ENCODE measurements at regions of chr10 and their contacts with region 1.

Region 1: GRCh38 chr10:16817125-16818019 is at the start of gene RSU1:
- DNase-seq: peak; percentile 100
- ATAC-seq: peak; percentile 96
- H3K4me3 ChIP-seq: peak within 1 kb of the TSS; percentile 71 to 75
- H3K4me3 Mint-ChIP-seq: peak within 1 kb of the TSS; percentile 95
- H3K27ac ChIP-seq: peak within 1 kb of the TSS; percentile 75 to 92
- H3K27ac Mint-ChIP-seq: peak within 1 kb of the TSS; percentile 95
- H3K4me1 ChIP-seq: peaks cover 22% of the 10 kb centered on the region
- H3K4me1 Mint-ChIP-seq: peaks cover 38% of the 10 kb centered on the region
- H3K27me3 ChIP-seq: no peaks in the 10 kb centered on the region
- H3K27me3 Mint-ChIP-seq: no peaks in the 10 kb centered on the region
- CTCF ChIP-seq: no peak
- total RNA-seq, gene RSU1: 23.8 to 26.1 TPM

Region 2: GRCh38 chr10:14959276-14960057 is 1857.9 kb before region 1 on chr10 and contains the start of gene MEIG1:
- CTCF ChIA-PET with region 1: no interaction called
- POLR2A ChIA-PET with region 1: no interaction called
- intact Hi-C with region 1: loop called in 1 of 2 experiments (anchors 10 kb)
- DNase-seq: peak; percentile 79 to 98 (median 92)
- ATAC-seq: peak; percentile 83
- H3K4me3 ChIP-seq: peak within 1 kb of the TSS; percentile 77 to 95
- H3K4me3 Mint-ChIP-seq: peak within 1 kb of the TSS; percentile 97
- H3K27ac ChIP-seq: peak within 1 kb of the TSS; percentile 86 to 88
- H3K27ac Mint-ChIP-seq: peak within 1 kb of the TSS; percentile 95
- H3K4me1 ChIP-seq: peaks cover 11% of the 10 kb centered on the region
- H3K4me1 Mint-ChIP-seq: peaks cover 24% of the 10 kb centered on the region
- H3K27me3 ChIP-seq: no peaks in the 10 kb centered on the region
- H3K27me3 Mint-ChIP-seq: no peaks in the 10 kb centered on the region
- CTCF ChIP-seq: no peak
- total RNA-seq, gene MEIG1: not detected

Region 3: GRCh38 chr10:16436758-16437539 is 380.4 kb before region 1 on chr10 and contains the start of gene PTER:
- CTCF ChIA-PET with region 1: no interaction called
- POLR2A ChIA-PET with region 1: interaction called, 3 read pairs
- intact Hi-C with region 1: loop called (anchors 1 to 2 kb)
- DNase-seq: peak; percentile 93 to 99 (median 96)
- ATAC-seq: peak; percentile 99
- H3K4me3 ChIP-seq: peak within 1 kb of the TSS; percentile 77 to 79
- H3K4me3 Mint-ChIP-seq: peak within 1 kb of the TSS; percentile 88
- H3K27ac ChIP-seq: peak within 1 kb of the TSS; percentile 61 to 77
- H3K27ac Mint-ChIP-seq: peak within 1 kb of the TSS; percentile 84
- H3K4me1 ChIP-seq: peaks cover 31% of the 10 kb centered on the region
- H3K4me1 Mint-ChIP-seq: peaks cover 51% of the 10 kb centered on the region
- H3K27me3 ChIP-seq: no peaks in the 10 kb centered on the region
- H3K27me3 Mint-ChIP-seq: no peaks in the 10 kb centered on the region
- CTCF ChIP-seq: no peak
- total RNA-seq, gene PTER: 6.4 TPM

Region 4: DNA sequence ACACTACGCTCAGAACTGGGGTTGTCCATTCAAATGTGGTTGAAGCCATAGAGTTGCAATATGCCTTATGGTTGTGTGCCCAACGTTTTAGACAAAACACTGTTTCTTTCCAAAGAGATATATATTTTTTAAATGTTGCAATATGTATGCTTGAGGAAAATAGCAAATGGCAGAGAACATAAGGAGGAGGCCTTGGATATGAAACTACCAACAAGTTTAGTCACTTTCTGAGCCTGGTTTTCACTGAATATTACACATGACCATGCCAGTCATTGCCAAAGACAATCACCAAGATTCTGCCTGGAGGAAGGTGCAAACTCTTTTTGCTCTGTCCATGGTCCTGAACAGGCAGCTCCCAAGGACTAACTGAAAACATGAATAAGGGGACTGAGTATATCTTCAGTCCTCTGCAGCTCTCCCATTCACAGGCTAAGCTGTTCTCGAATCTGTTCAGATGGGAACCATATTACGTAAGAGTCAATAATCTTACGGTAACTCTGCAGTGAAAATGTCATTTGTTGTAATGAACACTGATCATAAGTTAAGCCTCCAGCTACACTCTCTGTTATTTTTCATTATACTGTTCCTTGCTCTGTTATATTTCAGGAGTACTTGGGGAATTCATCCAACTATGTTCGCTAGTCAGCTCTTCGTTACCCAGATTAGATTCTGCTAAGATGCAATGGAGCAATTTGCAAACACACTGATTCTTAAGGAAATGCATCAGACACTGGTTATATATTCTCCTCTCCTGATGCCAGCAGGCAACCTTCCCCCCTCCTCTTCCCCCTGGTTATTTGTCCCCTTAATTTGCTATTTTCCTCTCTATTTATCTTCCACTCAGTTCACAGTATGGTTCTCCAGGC is 205.0 kb before region 1 on chr10:
- CTCF ChIA-PET with region 1: no interaction called
- POLR2A ChIA-PET with region 1: no interaction called
- intact Hi-C with region 1: no loop called
- DNase-seq: peak in 3 of 9 experiments; percentile 7 to 17 (median 12)
- ATAC-seq: no peak
- H3K4me3 ChIP-seq: no peak overlapping the region
- H3K4me3 Mint-ChIP-seq: no peak overlapping the region
- H3K27ac ChIP-seq: no peak overlapping the region
- H3K27ac Mint-ChIP-seq: no peak overlapping the region
- H3K4me1 ChIP-seq: no peaks in the 10 kb centered on the region
- H3K4me1 Mint-ChIP-seq: no peaks in the 10 kb centered on the region
- H3K27me3 ChIP-seq: no peaks in the 10 kb centered on the region
- H3K27me3 Mint-ChIP-seq: no peaks in the 10 kb centered on the region
- CTCF ChIP-seq: no peak

Region 5: DNA sequence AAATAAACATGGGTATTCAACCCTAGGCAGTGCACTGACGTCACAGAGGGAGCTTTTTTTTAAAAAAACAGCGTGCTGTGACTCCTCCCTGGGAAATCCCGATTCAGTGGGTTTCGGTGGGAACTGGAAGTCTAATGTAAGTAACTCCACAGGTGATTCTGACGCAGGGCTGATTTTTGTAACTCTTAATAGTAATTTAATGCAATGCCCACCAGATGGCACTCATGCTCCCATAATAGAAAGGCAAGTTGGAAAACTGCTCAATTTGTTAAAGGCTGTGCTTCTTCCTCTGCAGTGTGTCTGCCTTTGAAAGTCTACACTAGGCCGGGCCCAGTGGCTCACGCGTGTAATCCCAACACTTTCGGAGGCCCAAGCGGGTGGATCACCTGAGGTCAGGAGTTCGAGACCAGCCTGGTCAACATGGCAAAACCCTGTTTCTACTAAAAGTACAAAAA is 10.8 kb after region 1 on chr10:
- CTCF ChIA-PET with region 1: interaction called, 13 read pairs
- POLR2A ChIA-PET with region 1: interaction called, 3 read pairs
- intact Hi-C with region 1: loop called in 1 of 2 experiments (anchors 1 kb)
- DNase-seq: peak in 8 of 9 experiments; percentile 47 to 87 (median 63)
- ATAC-seq: peak; percentile 96
- H3K4me3 ChIP-seq: no peak overlapping the region
- H3K4me3 Mint-ChIP-seq: no peak overlapping the region
- H3K27ac ChIP-seq: no peak overlapping the region
- H3K27ac Mint-ChIP-seq: peak overlapping the region; percentile 45
- H3K4me1 ChIP-seq: no peaks in the 10 kb centered on the region
- H3K4me1 Mint-ChIP-seq: peaks cover 4% of the 10 kb centered on the region
- H3K27me3 ChIP-seq: no peaks in the 10 kb centered on the region
- H3K27me3 Mint-ChIP-seq: no peaks in the 10 kb centered on the region
- CTCF ChIP-seq: peak; percentile 69

Region 6: GRCh38 chr10:17200912-17201793 is 383.8 kb after region 1 on chr10 and contains the start of gene TRDMT1:
- CTCF ChIA-PET with region 1: no interaction called
- POLR2A ChIA-PET with region 1: interaction called, 3 read pairs
- intact Hi-C with region 1: loop called in 1 of 2 experiments (anchors 1 kb)
- DNase-seq: peak; percentile 66 to 87 (median 76)
- ATAC-seq: peak; percentile 77
- H3K4me3 ChIP-seq: peak within 1 kb of the TSS; percentile 69 to 83
- H3K4me3 Mint-ChIP-seq: peak within 1 kb of the TSS; percentile 98
- H3K27ac ChIP-seq: peak within 1 kb of the TSS; percentile 80 to 92
- H3K27ac Mint-ChIP-seq: peak within 1 kb of the TSS; percentile 97
- H3K4me1 ChIP-seq: peaks cover 21% of the 10 kb centered on the region
- H3K4me1 Mint-ChIP-seq: peaks cover 35% of the 10 kb centered on the region
- H3K27me3 ChIP-seq: no peaks in the 10 kb centered on the region
- H3K27me3 Mint-ChIP-seq: no peaks in the 10 kb centered on the region
- CTCF ChIP-seq: no peak
- total RNA-seq, gene TRDMT1: 10.4 to 11.7 TPM

Region 7: GRCh38 chr10:17643755-17644484 is 826.5 kb after region 1 on chr10 and contains the start of gene STAM:
- CTCF ChIA-PET with region 1: no interaction called
- POLR2A ChIA-PET with region 1: interaction called, 8 read pairs
- intact Hi-C with region 1: loop called (anchors 1 to 5 kb)
- DNase-seq: peak; percentile 87 to 96 (median 93)
- ATAC-seq: peak; percentile 86
- H3K4me3 ChIP-seq: peak within 1 kb of the TSS; percentile 84 to 85
- H3K4me3 Mint-ChIP-seq: peak within 1 kb of the TSS; percentile 99
- H3K27ac ChIP-seq: peak within 1 kb of the TSS; percentile 88 to 97
- H3K27ac Mint-ChIP-seq: peak within 1 kb of the TSS; percentile 100
- H3K4me1 ChIP-seq: peaks cover 40% of the 10 kb centered on the region
- H3K4me1 Mint-ChIP-seq: peaks cover 57% of the 10 kb centered on the region
- H3K27me3 ChIP-seq: no peaks in the 10 kb centered on the region
- H3K27me3 Mint-ChIP-seq: no peaks in the 10 kb centered on the region
- CTCF ChIP-seq: no peak
- total RNA-seq, gene STAM: 44.0 to 47.9 TPM